ENCODE measurements at regions of chr1 and their contacts with region 1.

Region 1: DNA sequence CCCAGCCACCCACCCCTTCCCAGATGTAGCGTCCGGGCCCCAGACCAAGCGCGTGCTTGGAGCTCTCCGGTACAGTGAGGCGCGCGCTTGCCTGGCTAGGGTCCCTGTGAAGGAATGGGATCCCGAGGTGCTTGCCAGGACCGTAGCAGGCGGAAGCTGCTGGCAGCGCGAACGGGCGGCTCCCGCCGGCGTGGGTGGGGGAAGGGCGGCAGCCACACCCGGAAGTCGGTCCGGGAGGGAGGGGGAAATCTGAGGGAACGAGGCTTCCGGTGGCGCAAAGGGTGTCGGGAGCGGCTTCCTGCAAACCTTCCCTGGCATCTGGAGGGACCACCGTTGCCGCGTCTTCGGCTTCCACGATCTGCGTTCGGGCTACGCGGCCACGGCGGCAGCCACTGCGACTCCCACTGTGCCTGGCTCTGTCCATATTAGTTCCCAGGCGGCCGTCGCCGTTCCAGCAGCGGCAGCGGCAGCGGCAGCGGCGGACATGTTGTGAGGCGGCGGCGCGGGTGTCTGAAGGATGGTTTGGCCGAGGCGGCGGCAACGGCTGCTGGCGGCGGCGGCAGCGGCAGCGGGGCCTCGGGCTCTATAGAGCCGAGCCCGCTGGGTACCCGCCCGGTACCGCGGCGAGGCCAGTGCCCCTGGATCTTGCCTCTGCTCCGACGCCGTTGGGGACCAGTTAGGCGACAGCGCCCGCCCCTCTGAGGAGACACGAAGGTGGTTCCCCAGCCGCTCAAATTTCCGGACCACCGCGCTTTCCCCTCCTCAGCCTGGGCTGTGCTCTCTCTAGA is at the start of gene DR1:
- DNase-seq: peak; percentile 82 to 96 (median 91)
- ATAC-seq: peak; percentile 91
- H3K4me3 ChIP-seq: peak within 1 kb of the TSS; percentile 93
- H3K4me3 Mint-ChIP-seq: peak within 1 kb of the TSS; percentile 92 to 100 (median 99)
- H3K27ac ChIP-seq: peak within 1 kb of the TSS; percentile 88
- H3K27ac Mint-ChIP-seq: peak within 1 kb of the TSS; percentile 89 to 99 (median 98)
- H3K4me1 ChIP-seq: peaks cover 13 to 25% of the 10 kb centered on the region in 2 donors
- H3K4me1 Mint-ChIP-seq: peaks cover 19 to 47% (median 35%) of the 10 kb centered on the region in 7 donors
- H3K27me3 ChIP-seq: no peaks in the 10 kb centered on the region
- H3K27me3 Mint-ChIP-seq: no peaks in the 10 kb centered on the region
- total RNA-seq, gene DR1: 46.2 to 104 (median 62.7) TPM

Region 2: DNA sequence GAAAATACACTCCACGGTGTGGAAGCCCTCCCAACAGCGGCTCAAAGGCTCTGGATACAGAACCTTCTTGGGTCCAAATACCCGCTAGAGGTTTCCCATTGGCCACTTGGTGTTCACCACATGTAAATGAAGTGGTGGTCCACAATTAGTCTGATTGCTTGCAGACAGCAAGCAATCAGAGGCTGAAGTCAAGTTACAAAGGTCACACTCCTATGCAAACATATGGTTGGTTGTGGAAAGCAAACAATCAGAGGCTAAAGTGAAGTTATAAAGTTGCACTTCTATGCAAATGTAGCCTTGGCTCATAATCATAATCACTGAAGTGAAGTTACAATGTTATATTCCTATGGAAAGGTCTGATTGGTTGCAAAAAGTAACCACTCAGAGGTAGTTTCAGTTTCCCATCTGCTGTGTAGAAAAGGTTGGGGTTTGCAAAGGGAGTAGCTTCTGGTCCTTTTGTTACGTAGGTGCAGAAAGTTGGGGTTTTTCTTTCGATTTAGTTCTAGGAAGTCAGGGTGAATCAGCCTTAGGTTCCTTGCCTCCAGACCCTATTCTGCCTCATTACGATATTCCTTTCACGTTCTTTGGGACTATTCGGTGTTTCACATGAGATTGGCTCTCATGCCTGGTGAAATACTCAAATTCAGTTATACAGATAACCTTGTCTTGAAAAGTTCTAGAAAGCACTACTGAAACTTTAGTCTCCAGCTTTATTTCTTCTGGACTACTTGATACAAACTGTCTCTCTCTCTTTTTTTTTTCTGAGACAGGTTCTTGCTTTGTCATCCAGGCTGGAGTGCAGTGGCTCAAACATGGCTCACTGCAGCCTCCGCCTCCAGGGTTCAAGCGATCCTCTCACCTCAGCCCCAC is 303.4 kb before region 1 on chr1:
- CTCF ChIA-PET with region 1: no interaction called
- POLR2A ChIA-PET with region 1: interaction called, 5 read pairs
- intact Hi-C with region 1: loop called (anchors 1 to 2 kb)
- DNase-seq: peak in 8 of 9 donors; percentile 27 to 87 (median 79)
- ATAC-seq: peak; percentile 99
- H3K4me3 ChIP-seq: peak overlapping the region; percentile 38
- H3K4me3 Mint-ChIP-seq: peak overlapping the region; percentile 42 to 89 (median 82)
- H3K27ac ChIP-seq: peak overlapping the region; percentile 78
- H3K27ac Mint-ChIP-seq: peak overlapping the region; percentile 88 to 98 (median 94)
- H3K4me1 ChIP-seq: peaks cover 9 to 10% of the 10 kb centered on the region in 2 donors
- H3K4me1 Mint-ChIP-seq: peaks cover 7 to 38% (median 14%) of the 10 kb centered on the region in 7 donors
- H3K27me3 ChIP-seq: no peaks in the 10 kb centered on the region
- H3K27me3 Mint-ChIP-seq: no peaks in the 10 kb centered on the region

Region 3: GRCh38 chr1:93304716-93305138 is 41.1 kb before region 1 on chr1:
- CTCF ChIA-PET with region 1: interaction called, 9 read pairs
- POLR2A ChIA-PET with region 1: interaction called, 7 read pairs
- intact Hi-C with region 1: loop called (anchors 1 to 2 kb)
- DNase-seq: peak in 8 of 9 donors; percentile 24 to 72 (median 54)
- ATAC-seq: peak; percentile 78
- H3K4me3 ChIP-seq: no peak overlapping the region
- H3K4me3 Mint-ChIP-seq: no peak overlapping the region
- H3K27ac ChIP-seq: no peak overlapping the region
- H3K27ac Mint-ChIP-seq: no peak overlapping the region
- H3K4me1 ChIP-seq: no peaks in the 10 kb centered on the region
- H3K4me1 Mint-ChIP-seq: peaks cover 0 to 4% (median 0%) of the 10 kb centered on the region in 7 donors
- H3K27me3 ChIP-seq: no peaks in the 10 kb centered on the region
- H3K27me3 Mint-ChIP-seq: no peaks in the 10 kb centered on the region

Region 4: DNA sequence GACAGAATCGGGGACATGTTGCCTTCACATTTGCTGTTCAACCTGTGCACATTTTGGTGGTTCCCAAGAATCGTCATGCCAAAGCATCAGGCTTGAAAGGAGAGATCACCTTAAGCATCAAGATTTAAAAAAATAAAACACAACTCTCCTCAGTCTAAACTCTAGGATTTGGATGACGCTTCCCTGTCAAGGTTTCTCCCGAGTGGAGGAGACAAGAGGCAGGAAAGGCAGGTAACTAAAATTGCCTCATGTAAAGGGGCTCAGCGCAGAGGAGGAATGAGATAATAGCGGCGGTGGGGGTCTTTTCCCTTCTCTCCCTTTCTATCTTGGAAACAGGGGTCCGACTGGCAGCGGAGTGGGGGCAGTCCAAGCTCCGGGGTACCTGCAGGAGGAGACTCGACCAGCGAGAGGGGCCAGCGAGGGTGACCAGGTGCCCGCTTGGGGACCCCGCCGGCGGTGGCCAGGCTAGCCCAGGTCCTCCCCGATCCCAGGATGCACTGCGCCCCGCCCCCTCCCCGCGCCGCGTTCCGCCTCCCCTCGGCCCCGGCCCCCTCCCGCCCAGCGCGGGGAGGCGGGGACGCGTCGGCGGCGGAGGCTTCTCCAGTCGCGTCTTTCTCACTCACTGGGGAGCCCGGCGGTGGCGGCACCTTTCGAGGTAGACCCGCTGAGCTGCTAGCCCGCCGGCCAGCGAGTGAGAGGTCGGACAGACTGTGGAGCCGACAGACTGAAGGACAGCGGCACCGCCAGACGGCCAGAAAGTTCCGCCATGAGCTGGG is 101.9 kb after region 1 on chr1 and contains the start of gene FNBP1L:
- CTCF ChIA-PET with region 1: no interaction called
- POLR2A ChIA-PET with region 1: interaction called, 3 read pairs
- intact Hi-C with region 1: loop called in 1 of 2 experiments (anchors 2 kb)
- DNase-seq: peak; percentile 40 to 60 (median 47)
- ATAC-seq: peak; percentile 87
- H3K4me3 ChIP-seq: peak within 1 kb of the TSS; percentile 61
- H3K4me3 Mint-ChIP-seq: peak within 1 kb of the TSS; percentile 89 to 97 (median 93)
- H3K27ac ChIP-seq: peak within 1 kb of the TSS; percentile 11
- H3K27ac Mint-ChIP-seq: peak within 1 kb of the TSS in 6 of 9 donors; percentile 28 to 94 (median 68)
- H3K4me1 ChIP-seq: peaks cover 10 to 12% of the 10 kb centered on the region in 2 donors
- H3K4me1 Mint-ChIP-seq: peaks cover 8 to 24% (median 22%) of the 10 kb centered on the region in 7 donors
- H3K27me3 ChIP-seq: peaks cover 19 to 22% of the 10 kb centered on the region in 2 donors
- H3K27me3 Mint-ChIP-seq: peaks cover 29 to 70% (median 54%) of the 10 kb centered on the region in 5 donors
- total RNA-seq, gene FNBP1L: 0.07 to 2.6 (median 1.1) TPM

Region 5: DNA sequence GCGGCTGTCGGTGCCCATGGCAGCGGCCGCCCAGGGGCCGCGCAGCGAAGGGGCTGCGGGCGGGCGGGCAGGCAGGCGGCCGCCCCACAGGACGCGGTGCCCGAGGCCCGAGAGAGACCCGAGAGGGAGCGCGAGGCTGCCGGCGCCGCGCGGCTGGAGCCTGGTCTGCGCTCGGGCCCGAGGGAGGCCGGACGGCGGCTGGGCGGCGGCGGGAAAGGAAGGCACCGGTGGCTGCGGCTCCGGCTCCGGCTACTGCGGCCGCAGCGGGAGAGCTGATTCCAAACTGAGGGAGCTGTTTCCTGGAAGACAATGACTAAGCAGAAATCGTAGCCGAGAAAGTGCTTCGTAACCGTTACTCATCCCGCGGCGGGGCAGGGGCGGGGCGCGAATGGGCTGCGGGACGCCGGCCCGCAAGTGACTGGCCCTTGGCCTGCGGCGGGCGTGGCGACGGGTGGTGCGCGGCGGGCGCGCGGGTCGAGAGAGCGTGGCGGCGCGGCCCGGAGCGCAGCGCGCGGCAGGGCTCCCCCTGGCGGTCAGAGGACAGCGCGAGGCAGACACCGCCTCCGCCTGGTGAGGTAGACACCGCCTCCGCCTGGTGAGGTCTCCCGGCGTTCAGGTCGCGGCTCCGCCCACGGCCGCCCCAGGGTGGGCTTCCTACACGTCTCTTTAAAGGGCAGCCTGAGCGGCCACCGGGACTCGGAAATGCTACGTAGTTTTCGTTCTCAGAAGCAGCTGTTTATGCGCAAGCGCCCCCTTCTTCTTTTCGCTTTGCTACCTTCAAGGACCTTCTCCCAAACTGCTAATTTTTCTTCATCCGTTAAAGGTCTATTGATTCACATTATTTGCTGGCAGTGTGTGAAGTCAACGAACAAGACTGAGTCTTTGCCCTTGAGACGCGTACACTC is 563.6 kb after region 1 on chr1 and contains the start of gene GCLM:
- CTCF ChIA-PET with region 1: no interaction called
- POLR2A ChIA-PET with region 1: no interaction called
- intact Hi-C with region 1: loop called (anchors 2 to 5 kb)
- DNase-seq: peak; percentile 81 to 97 (median 88)
- ATAC-seq: peak; percentile 98
- H3K4me3 ChIP-seq: peak within 1 kb of the TSS; percentile 61
- H3K4me3 Mint-ChIP-seq: peak within 1 kb of the TSS; percentile 86 to 99 (median 90)
- H3K27ac ChIP-seq: peak within 1 kb of the TSS; percentile 73
- H3K27ac Mint-ChIP-seq: peak within 1 kb of the TSS; percentile 60 to 94 (median 90)
- H3K4me1 ChIP-seq: peaks cover 9 to 13% of the 10 kb centered on the region in 2 donors
- H3K4me1 Mint-ChIP-seq: peaks cover 19 to 38% (median 33%) of the 10 kb centered on the region in 7 donors
- H3K27me3 ChIP-seq: no peaks in the 10 kb centered on the region
- H3K27me3 Mint-ChIP-seq: peaks cover 0 to 30% (median 0%) of the 10 kb centered on the region in 5 donors
- total RNA-seq, gene GCLM: 6.4 to 23.8 (median 11.5) TPM

Region 6: GRCh38 chr1:95233737-95234500 is 1888.1 kb after region 1 on chr1 and contains the start of gene RWDD3:
- CTCF ChIA-PET with region 1: no interaction called
- POLR2A ChIA-PET with region 1: no interaction called
- intact Hi-C with region 1: loop called in 1 of 2 experiments (anchors 10 kb)
- DNase-seq: peak; percentile 86 to 96 (median 93)
- ATAC-seq: peak; percentile 98
- H3K4me3 ChIP-seq: peak within 1 kb of the TSS; percentile 78
- H3K4me3 Mint-ChIP-seq: peak within 1 kb of the TSS; percentile 89 to 97 (median 92)
- H3K27ac ChIP-seq: peak within 1 kb of the TSS; percentile 79
- H3K27ac Mint-ChIP-seq: peak within 1 kb of the TSS; percentile 86 to 97 (median 91)
- H3K4me1 ChIP-seq: peaks cover 6 to 12% of the 10 kb centered on the region in 2 donors
- H3K4me1 Mint-ChIP-seq: peaks cover 23 to 54% (median 46%) of the 10 kb centered on the region in 7 donors
- H3K27me3 ChIP-seq: no peaks in the 10 kb centered on the region
- H3K27me3 Mint-ChIP-seq: peaks cover 16 to 30% (median 23%) of the 10 kb centered on the region in 5 donors
- total RNA-seq, gene RWDD3: 9.1 to 27.9 (median 20.0) TPM

Measured in naive thymus-derived CD4-positive, alpha-beta T cell (primary cell).